ENCODE measurements at regions of chr7 and their contacts with region 1.

Region 1: DNA sequence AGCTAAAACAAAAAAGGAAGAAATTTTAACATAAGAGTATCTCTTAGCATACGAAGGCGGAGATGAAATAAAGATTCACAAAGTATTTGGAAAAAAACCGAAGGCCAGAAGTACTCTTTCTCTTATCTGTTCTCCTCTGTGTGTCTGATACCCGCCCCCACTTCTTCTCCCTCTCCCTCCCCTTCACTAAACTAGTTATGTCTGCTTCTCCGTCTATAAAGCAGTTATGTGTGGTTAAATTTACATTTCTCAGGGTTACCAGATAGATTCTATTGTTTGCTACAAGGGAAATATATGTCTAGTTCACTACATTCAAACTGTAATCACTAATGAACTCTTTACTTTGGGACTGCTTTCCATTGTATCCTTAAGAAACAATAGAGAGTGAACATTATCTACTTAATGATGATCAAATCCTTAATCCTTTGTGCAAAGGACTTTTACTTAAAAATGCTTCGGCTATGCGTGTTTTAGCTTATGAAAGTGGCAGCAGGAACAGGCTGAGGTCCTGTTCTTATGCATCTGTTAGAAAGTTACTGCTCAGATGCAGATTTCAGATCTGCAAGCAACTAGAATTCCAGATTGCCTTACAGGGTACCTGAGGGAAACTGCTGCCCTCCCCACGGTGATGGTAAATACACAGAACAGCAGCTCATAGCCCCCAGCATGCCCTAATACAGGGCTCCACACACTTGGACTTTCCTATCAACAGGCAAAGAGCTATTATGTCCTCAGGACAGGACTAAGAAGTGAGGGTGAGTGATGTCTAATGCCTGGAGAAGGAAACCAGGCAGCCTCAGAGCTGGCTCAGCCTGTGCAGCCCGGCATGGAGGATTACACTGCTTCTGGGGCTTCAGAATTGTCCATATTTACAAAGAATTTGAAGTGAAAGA is 273.3 kb downstream of the FZD1 start:
- DNase-seq: no peak
- H3K4me3 ChIP-seq: no peak overlapping the region
- H3K27ac ChIP-seq: no peak overlapping the region
- H3K4me1 ChIP-seq: no peaks in the 10 kb centered on the region
- H3K27me3 ChIP-seq: no peaks in the 10 kb centered on the region
- CTCF ChIP-seq: no peak
- POLR2A ChIP-seq: no peak

Region 2: GRCh38 chr7:91383053-91383904 is 154.2 kb before region 1 on chr7:
- intact Hi-C with region 1: no loop called
- DNase-seq: no peak
- H3K4me3 ChIP-seq: no peak overlapping the region
- H3K27ac ChIP-seq: no peak overlapping the region
- H3K4me1 ChIP-seq: no peaks in the 10 kb centered on the region
- H3K27me3 ChIP-seq: no peaks in the 10 kb centered on the region
- CTCF ChIP-seq: no peak
- POLR2A ChIP-seq: no peak

Region 3: DNA sequence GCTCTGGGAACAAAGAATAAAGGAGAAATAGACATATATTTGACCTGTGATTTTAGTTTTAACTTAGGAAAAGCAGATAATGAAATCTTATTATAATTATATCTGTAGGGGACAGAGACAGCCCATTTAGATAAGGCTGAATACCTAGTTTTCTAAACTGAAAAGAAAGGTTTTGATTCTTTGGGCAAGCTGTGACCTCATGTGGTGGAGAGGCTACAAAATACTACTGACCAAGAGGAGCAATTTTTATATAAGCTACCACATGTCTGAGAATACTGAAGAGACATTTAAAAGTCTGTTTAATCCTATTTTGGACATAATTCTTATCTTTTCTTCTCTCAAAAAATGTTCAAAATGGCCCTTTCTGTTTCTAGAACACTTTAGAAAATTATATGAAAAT is 72.0 kb after region 1 on chr7:
- intact Hi-C with region 1: no loop called
- DNase-seq: no peak
- H3K4me3 ChIP-seq: no peak overlapping the region
- H3K27ac ChIP-seq: no peak overlapping the region
- H3K4me1 ChIP-seq: no peaks in the 10 kb centered on the region
- H3K27me3 ChIP-seq: no peaks in the 10 kb centered on the region
- CTCF ChIP-seq: no peak
- POLR2A ChIP-seq: no peak

Region 4: GRCh38 chr7:91683823-91684222 is 146.3 kb after region 1 on chr7:
- intact Hi-C with region 1: no loop called
- DNase-seq: no peak
- H3K4me3 ChIP-seq: no peak overlapping the region
- H3K27ac ChIP-seq: no peak overlapping the region
- H3K4me1 ChIP-seq: no peaks in the 10 kb centered on the region
- H3K27me3 ChIP-seq: no peaks in the 10 kb centered on the region
- CTCF ChIP-seq: no peak
- POLR2A ChIP-seq: no peak

Region 5: GRCh38 chr7:91759215-91759871 is 221.8 kb after region 1 on chr7:
- intact Hi-C with region 1: loop called in 1 of 2 experiments (anchors 10 kb)
- DNase-seq: no peak
- H3K4me3 ChIP-seq: no peak overlapping the region
- H3K27ac ChIP-seq: no peak overlapping the region
- H3K4me1 ChIP-seq: no peaks in the 10 kb centered on the region
- H3K27me3 ChIP-seq: no peaks in the 10 kb centered on the region
- CTCF ChIP-seq: no peak
- POLR2A ChIP-seq: no peak

Region 6: DNA sequence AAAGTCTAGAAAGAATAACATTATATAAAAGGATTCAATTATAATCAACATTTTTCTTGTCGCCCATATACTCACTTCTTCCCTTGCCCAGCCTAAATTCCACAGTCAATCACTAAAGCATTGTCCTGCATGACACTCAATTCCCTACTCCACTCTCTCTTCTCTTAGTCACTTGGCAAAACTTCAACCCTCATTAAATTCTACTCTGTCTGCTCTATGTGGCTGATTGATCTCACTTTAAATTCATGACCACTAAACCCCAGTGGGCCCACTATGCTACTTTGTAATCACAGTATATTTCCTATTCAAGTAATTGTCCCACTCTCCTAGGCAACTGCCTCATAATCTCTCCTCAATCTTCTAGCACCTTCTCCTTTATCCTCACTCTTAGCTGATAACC is 288.9 kb after region 1 on chr7:
- intact Hi-C with region 1: no loop called
- DNase-seq: no peak
- H3K4me3 ChIP-seq: no peak overlapping the region
- H3K27ac ChIP-seq: no peak overlapping the region
- H3K4me1 ChIP-seq: no peaks in the 10 kb centered on the region
- H3K27me3 ChIP-seq: no peaks in the 10 kb centered on the region
- CTCF ChIP-seq: no peak
- POLR2A ChIP-seq: no peak

Measured in adrenal gland (tissue), 19 donors.